GM12878 (cell line): ENCODE measurements at regions of chr7 and their contacts with region 1.

Region 1: GRCh38 chr7:141715794-141716689 is 7.9 kb downstream of the WEE2 start:
- DNase-seq: no peak
- ATAC-seq: no peak
- H3K4me3 ChIP-seq: no peak overlapping the region
- H3K27ac ChIP-seq: no peak overlapping the region
- H3K4me1 ChIP-seq: no peaks in the 10 kb centered on the region
- H3K27me3 ChIP-seq: no peaks in the 10 kb centered on the region; a peak in 1 of 4 replicates
- CTCF ChIP-seq: no peak
- EP300 ChIP-seq: no peak
- POLR2A ChIP-seq: no peak
- RAD21 ChIP-seq: no peak

Region 2: DNA sequence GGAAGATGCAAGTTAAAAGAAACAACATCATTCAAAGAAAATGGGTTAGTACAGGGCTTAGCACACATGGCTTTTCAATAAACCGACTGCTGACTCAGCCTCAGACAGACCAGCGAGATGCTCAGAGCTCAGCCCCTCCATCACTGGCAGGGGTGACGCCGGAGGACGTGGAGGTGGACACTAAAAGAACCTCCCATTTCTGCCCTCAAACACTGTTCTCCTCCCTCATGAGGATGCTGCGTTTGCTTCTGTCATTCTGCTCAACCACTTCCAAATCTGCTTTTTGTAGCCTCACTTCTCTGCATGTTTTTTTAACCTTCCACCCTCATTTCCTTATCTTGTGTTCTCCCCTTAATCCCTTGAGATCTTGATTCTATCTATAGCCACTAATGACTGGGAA is 29.4 kb before region 1 on chr7:
- CTCF ChIA-PET with region 1: no interaction called
- POLR2A ChIA-PET with region 1: no interaction called
- RAD21 ChIA-PET with region 1: no interaction called
- SMC1A ChIA-PET with region 1: no interaction called
- in situ Hi-C with region 1: no loop called
- intact Hi-C with region 1: no loop called
- DNase-seq: no peak
- ATAC-seq: no peak
- H3K4me3 ChIP-seq: no peak overlapping the region
- H3K27ac ChIP-seq: no peak overlapping the region
- H3K4me1 ChIP-seq: no peaks in the 10 kb centered on the region
- H3K27me3 ChIP-seq: no peaks in the 10 kb centered on the region
- CTCF ChIP-seq: no peak
- EP300 ChIP-seq: no peak
- POLR2A ChIP-seq: no peak
- RAD21 ChIP-seq: no peak

Region 3: DNA sequence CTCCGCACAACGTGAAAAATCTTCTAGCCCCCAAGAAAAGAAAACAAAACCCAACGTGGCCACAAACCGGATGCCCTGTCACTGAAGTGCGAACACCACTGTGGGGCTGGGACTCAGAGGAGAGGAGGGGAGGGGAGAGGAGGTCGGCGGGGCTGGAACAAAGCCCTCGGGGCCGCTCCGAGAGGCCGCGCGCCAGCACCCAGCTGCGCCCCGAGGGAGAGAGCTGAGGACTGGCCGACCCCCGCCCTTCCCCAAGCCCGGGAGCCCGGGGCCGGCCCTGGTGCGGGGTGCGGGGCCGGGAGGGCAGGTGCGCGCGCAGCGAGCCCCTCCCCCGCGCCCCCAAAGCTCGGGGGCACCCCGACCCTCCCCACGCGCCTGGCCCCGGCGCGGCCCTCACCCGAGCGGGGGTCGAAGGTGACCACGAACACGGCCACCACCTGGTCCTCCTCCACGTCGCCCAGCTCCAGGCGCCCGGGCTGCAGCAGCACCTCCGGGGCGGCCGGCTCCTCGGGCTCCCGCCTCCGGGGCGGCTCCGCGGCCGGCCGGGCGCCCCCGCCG is 14.5 kb before region 1 on chr7:
- CTCF ChIA-PET with region 1: interaction called, 12 read pairs
- POLR2A ChIA-PET with region 1: interaction called, 4 read pairs
- RAD21 ChIA-PET with region 1: no interaction called
- SMC1A ChIA-PET with region 1: interaction called, 5 read pairs
- in situ Hi-C with region 1: no loop called
- intact Hi-C with region 1: no loop called
- DNase-seq: peak; percentile 20
- ATAC-seq: peak; percentile 91
- H3K4me3 ChIP-seq: peak overlapping the region; percentile 76; the same call in 1 of the 2 replicates
- H3K27ac ChIP-seq: peak overlapping the region; percentile 49
- H3K4me1 ChIP-seq: peaks cover 4% of the 10 kb centered on the region; the same call in 1 of the 2 replicates
- H3K27me3 ChIP-seq: peaks cover 0 to 2% of the 10 kb centered on the region in 2 experiments; a peak in 1 of 4 replicates
- CTCF ChIP-seq: no peak
- EP300 ChIP-seq: no peak
- POLR2A ChIP-seq: peak; percentile 74
- RAD21 ChIP-seq: no peak

Region 4: DNA sequence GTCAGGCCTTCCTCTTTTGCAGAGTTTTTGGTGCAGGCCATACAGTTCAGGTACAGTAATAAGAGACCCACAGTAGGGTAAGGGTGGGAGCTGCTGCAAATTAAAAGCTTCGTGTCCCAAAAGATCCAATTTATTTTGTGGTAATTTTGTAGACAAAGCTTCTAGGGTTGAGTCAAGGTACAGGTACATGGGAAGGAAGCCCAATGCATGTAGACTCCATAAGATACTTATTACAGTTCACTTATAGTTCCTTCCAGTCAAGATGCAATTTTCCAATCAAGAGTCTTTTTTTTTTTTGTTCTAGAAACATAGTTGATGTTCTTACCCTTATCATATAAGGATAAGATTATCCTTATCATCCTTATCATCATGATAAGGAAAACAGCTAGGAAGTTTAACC is 60.3 kb after region 1 on chr7 and contains the start of gene TAS2R4:
- CTCF ChIA-PET with region 1: no interaction called
- POLR2A ChIA-PET with region 1: no interaction called
- RAD21 ChIA-PET with region 1: no interaction called
- SMC1A ChIA-PET with region 1: no interaction called
- in situ Hi-C with region 1: no loop called
- intact Hi-C with region 1: no loop called
- DNase-seq: no peak
- ATAC-seq: no peak
- H3K4me3 ChIP-seq: no peak within 1 kb of the TSS
- H3K27ac ChIP-seq: no peak within 1 kb of the TSS
- H3K4me1 ChIP-seq: no peaks in the 10 kb centered on the region
- H3K27me3 ChIP-seq: no peaks in the 10 kb centered on the region
- CTCF ChIP-seq: no peak
- EP300 ChIP-seq: no peak
- POLR2A ChIP-seq: no peak
- RAD21 ChIP-seq: no peak
- polyA plus RNA-seq, gene TAS2R4: 0.04 TPM in 1 of 2 experiments, not detected in the other